Cardiac septum (tissue), 1 donor: ENCODE measurements at regions of chr13 and their contacts with region 1.

Region 1: DNA sequence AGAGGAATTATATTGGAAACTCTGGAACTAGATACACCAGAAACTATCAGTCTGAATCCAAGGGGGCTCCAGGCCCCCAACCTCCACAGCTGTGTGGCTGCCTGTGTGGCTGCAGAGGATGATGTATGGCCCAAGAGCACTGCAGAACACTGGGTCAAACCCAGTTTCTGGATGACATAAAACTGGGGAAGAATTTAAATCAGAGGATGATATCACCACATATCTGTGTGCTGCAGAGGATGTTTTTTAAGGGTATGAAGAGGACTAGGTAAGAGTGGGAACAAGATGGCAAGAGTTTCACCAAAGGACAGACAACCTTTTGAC is 226.4 kb downstream of the SUCLA2 start:
- DNase-seq: no peak

Region 2: GRCh38 chr13:46975173-46975572 is 799.5 kb before region 1 on chr13:
- intact Hi-C with region 1: loop called (anchors 10 kb)
- DNase-seq: no peak